ENCODE measurements at regions of chr6 and their contacts with region 1.

Region 1: DNA sequence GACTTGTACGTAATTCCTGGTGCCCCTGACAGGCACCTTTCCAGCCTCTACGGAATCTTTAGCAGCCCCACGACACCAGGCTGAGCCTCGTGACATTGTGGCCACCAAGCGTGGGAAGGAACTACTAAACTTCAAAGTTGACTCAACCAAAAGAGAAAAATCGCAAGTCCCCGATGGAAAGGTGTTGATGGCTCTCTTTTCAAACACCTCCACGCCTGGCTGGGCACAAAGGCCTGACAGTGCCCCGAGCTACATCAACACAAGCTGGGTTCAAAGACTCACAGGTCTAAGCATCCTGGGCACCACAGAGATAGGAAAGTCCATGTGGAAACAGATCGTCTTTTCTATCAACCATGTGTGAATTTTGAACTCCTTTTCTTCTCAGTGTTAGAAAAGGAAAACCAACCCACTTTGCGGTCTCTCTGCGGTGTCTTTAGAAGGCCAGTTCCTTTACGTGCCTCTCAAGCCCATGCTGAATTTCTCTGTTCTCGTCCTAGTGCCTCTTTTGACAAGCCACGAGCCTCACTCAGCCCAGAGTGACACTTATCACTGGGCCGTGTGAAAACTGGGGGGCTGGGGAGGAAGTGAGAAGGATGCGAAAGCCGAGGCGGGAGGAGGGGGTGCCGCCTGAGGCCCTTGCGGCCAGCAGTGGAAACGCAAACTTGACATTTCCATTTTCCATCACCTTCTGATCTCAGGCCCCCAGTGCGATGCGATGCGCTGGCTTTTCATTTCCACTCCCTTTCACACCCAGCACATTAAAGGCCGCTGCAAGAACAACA is 59.4 kb downstream of the GFOD1 start:
- DNase-seq: peak; percentile 89
- H3K4me3 Mint-ChIP-seq: peak overlapping the region; percentile 71
- H3K27ac Mint-ChIP-seq: peak overlapping the region; percentile 96
- H3K4me1 Mint-ChIP-seq: peaks cover 65% of the 10 kb centered on the region
- H3K27me3 Mint-ChIP-seq: no peaks in the 10 kb centered on the region

Region 2: GRCh38 chr6:13336553-13336952 is 91.4 kb before region 1 on chr6:
- intact Hi-C with region 1: no loop called
- DNase-seq: peak; percentile 93
- H3K4me3 Mint-ChIP-seq: no peak overlapping the region
- H3K27ac Mint-ChIP-seq: no peak overlapping the region
- H3K4me1 Mint-ChIP-seq: peaks cover 34% of the 10 kb centered on the region
- H3K27me3 Mint-ChIP-seq: no peaks in the 10 kb centered on the region

Region 3: GRCh38 chr6:13375360-13375878 is 52.6 kb before region 1 on chr6:
- intact Hi-C with region 1: loop called (anchors 1 kb)
- DNase-seq: peak; percentile 70
- H3K4me3 Mint-ChIP-seq: peak overlapping the region; percentile 28
- H3K27ac Mint-ChIP-seq: peak overlapping the region; percentile 39
- H3K4me1 Mint-ChIP-seq: peaks cover 19% of the 10 kb centered on the region
- H3K27me3 Mint-ChIP-seq: no peaks in the 10 kb centered on the region

Region 4: DNA sequence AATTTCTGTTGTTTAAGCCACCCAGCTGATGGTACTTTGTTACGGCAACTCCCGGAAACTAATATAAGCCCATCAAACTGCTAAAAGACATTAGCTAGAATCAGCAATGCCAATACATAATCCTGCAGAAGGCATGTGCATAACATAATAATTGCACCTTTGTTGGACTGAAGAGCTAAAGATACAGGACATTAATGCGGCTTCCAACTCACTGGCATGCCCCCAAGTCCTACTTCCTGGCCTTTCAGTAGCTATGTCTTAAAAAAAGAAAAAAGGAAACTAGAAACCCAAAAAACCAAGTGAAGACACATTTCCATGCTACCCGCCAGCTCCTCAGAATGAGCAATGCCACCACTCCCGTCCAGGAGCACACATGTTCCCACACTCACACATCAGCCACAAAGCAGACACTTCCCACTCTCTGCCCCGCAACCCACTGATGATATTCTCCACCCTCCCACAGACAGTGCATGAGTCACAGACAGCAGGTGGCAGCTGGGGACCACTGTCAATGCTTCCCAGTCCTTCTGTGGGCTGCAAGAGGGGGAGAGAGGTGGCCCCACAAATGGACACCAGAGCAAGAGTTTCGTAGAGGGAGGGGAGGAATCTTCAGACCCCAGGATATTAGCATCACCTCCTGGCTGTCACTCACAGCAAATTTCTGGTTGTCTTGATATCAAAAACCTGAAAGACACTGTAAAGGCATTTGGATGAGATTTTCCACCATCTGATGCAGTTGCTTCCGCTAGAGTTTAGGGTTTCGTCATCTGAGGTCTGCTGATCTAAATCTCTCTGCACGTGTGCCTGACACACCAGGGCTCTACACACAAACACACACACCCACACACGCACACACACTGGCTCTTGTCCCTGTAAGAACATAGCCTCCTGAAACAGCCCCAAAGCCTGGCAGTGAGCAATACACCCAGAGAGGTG is 26.6 kb after region 1 on chr6:
- intact Hi-C with region 1: loop called (anchors 1 kb)
- DNase-seq: peak; percentile 85
- H3K4me3 Mint-ChIP-seq: peak overlapping the region; percentile 42
- H3K27ac Mint-ChIP-seq: peak overlapping the region; percentile 93
- H3K4me1 Mint-ChIP-seq: peaks cover 43% of the 10 kb centered on the region
- H3K27me3 Mint-ChIP-seq: no peaks in the 10 kb centered on the region

Region 5: DNA sequence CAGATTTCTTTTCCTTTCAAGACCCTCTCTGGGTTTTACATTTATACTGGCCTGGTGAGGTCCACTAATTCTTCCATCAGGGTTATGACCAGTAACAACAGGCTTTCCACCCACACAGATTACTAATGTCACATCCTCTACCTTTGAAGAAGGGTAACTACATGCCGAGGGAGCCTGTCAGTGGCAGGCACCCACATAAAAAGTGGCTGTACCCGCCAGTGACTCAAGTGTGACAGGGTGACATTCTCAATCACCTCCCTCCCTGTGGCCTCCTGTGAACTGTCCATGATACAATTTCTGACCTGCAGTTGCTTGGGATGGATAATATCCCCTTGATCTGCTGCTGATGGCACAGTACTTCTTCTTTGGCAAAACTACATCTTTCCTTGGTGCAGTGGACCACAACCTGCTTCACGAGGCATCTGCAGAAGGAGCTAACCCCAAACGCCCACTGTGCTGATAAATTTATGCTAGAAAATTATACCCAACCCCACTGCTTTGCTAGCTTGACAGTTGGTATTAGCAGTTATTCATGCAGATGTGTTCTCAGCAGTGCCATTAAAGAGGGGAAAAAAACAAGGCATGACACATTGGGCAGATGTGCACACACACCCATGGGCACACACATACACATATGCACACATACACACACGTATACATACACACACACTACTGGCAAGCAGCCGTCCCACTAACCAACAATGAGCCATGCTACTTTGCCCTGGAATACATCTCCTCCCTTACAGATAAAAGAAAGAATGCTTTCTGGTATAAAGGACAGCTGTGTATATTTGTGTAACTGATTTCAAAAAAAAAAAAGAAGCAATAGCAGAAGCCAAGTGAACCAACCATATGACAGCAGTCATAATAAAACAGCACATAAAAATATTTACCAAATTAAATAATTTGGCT is 38.6 kb after region 1 on chr6:
- intact Hi-C with region 1: loop called (anchors 1 kb)
- DNase-seq: no peak
- H3K4me3 Mint-ChIP-seq: peak overlapping the region; percentile 60
- H3K27ac Mint-ChIP-seq: peak overlapping the region; percentile 88
- H3K4me1 Mint-ChIP-seq: peaks cover 52% of the 10 kb centered on the region
- H3K27me3 Mint-ChIP-seq: no peaks in the 10 kb centered on the region

Region 6: GRCh38 chr6:13787137-13787536 is 359.1 kb after region 1 on chr6:
- intact Hi-C with region 1: loop called (anchors 5 kb)
- DNase-seq: no peak
- H3K4me3 Mint-ChIP-seq: peak overlapping the region; percentile 38
- H3K27ac Mint-ChIP-seq: peak overlapping the region; percentile 80
- H3K4me1 Mint-ChIP-seq: peaks cover 26% of the 10 kb centered on the region
- H3K27me3 Mint-ChIP-seq: no peaks in the 10 kb centered on the region